Left ventricle myocardium inferior (tissue), 1 donor: ENCODE measurements at regions of chr13 and their contacts with region 1.

Region 1: GRCh38 chr13:19863323-19864023 is at the start of gene ZMYM5:
- DNase-seq: peak; percentile 99
- H3K4me3 ChIP-seq: peak within 1 kb of the TSS; percentile 85
- H3K27ac ChIP-seq: peak within 1 kb of the TSS; percentile 98
- H3K4me1 ChIP-seq: peaks cover 44% of the 10 kb centered on the region
- H3K27me3 ChIP-seq: no peaks in the 10 kb centered on the region
- CTCF ChIP-seq: no peak
- total RNA-seq, gene ZMYM5: 7.5 TPM

Region 2: DNA sequence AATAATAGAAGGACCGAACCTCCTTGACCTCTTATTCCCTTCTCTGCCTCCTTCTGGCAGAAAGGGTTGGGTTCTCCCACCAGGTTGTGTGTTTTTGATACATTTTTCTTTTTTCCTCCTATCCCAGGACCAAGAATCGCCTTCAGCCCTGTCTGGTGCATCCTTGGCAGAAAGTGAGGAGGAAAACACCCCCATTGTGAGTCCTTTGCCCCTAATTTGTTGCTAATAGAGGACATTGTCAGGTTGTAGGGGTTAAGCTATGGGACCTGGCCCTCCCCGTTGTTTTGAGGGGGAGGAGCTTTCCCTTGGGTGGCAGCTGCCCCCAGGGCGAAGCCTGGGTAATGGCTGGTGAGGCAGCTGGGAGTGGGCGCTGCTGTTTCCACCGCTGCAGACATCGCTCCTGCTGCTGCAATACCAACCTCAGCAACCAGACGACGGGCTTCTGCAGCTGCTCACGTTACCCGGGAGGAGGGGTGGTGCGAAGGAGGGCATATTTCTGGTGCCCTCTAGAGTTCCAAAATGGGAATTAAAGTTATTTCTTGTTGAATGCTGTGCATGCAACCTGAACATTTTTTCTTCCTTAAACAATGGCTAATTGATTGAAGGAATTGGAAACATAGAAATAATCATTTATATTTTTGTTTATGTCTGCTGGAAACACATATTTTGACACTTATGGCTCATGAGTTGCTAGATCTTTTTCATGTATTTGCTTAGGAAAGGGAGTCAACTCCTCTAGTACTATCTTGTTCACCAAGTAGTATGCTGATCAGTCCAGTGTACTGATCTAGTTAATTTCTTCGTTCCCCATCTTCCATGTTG is 96.6 kb after region 1 on chr13:
- intact Hi-C with region 1: loop called (anchors 10 kb)
- DNase-seq: peak; percentile 76
- H3K4me3 ChIP-seq: peak overlapping the region; percentile 80
- H3K27ac ChIP-seq: peak overlapping the region; percentile 98
- H3K4me1 ChIP-seq: peaks cover 70% of the 10 kb centered on the region
- H3K27me3 ChIP-seq: no peaks in the 10 kb centered on the region
- CTCF ChIP-seq: peak; percentile 95

Region 3: GRCh38 chr13:20019043-20019442 is 155.6 kb after region 1 on chr13:
- intact Hi-C with region 1: no loop called
- DNase-seq: no peak
- H3K4me3 ChIP-seq: no peak overlapping the region
- H3K27ac ChIP-seq: no peak overlapping the region
- H3K4me1 ChIP-seq: peaks cover 17% of the 10 kb centered on the region
- H3K27me3 ChIP-seq: no peaks in the 10 kb centered on the region
- CTCF ChIP-seq: no peak